ENCODE measurements at regions of chr16 and their contacts with region 1.

Region 1: GRCh38 chr16:54489225-54490111 is 202.9 kb upstream of the IRX3 start:
- DNase-seq: no peak
- H3K4me3 ChIP-seq: no peak overlapping the region
- H3K27ac ChIP-seq: no peak overlapping the region
- H3K4me1 ChIP-seq: no peaks in the 10 kb centered on the region
- H3K27me3 ChIP-seq: no peaks in the 10 kb centered on the region
- CTCF ChIP-seq: no peak
- POLR2A ChIP-seq: no peak

Region 2: GRCh38 chr16:54422569-54422978 is 66.9 kb before region 1 on chr16:
- intact Hi-C with region 1: loop called in 1 of 2 experiments (anchors 10 kb)
- DNase-seq: no peak
- H3K4me3 ChIP-seq: no peak overlapping the region
- H3K27ac ChIP-seq: peak overlapping the region in 1 of 5 donors; percentile 65
- H3K4me1 ChIP-seq: peaks cover 8 to 18% of the 10 kb centered on the region in 2 donors
- H3K27me3 ChIP-seq: no peaks in the 10 kb centered on the region
- CTCF ChIP-seq: no peak
- POLR2A ChIP-seq: no peak

Region 3: DNA sequence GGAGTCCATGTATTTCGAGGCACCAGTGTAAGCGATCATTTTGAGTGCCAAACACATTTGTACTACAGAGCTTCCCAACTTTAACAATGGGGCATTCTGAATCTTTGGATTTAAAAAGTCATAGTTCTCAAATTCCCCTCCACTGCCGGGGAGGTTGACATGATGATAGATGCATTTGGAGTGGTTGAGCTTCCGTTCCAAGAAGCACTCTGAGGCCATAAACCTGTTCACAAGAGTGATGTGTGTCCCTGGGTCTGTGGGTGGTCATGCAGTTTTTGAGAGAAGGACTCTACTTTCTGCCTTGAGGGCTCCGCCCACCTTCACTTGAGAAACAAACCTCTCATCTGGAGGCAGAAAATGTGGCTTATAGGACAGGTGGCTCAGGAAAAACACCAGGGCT is 484.9 kb after region 1 on chr16:
- intact Hi-C with region 1: no loop called
- DNase-seq: no peak
- H3K4me3 ChIP-seq: no peak overlapping the region
- H3K27ac ChIP-seq: no peak overlapping the region
- H3K4me1 ChIP-seq: no peaks in the 10 kb centered on the region
- H3K27me3 ChIP-seq: no peaks in the 10 kb centered on the region
- CTCF ChIP-seq: no peak
- POLR2A ChIP-seq: no peak

Measured in adrenal gland (tissue), 19 donors.